MCF 10A (cell line): ENCODE measurements at regions of chr16 and their contacts with region 1.

Region 1: DNA sequence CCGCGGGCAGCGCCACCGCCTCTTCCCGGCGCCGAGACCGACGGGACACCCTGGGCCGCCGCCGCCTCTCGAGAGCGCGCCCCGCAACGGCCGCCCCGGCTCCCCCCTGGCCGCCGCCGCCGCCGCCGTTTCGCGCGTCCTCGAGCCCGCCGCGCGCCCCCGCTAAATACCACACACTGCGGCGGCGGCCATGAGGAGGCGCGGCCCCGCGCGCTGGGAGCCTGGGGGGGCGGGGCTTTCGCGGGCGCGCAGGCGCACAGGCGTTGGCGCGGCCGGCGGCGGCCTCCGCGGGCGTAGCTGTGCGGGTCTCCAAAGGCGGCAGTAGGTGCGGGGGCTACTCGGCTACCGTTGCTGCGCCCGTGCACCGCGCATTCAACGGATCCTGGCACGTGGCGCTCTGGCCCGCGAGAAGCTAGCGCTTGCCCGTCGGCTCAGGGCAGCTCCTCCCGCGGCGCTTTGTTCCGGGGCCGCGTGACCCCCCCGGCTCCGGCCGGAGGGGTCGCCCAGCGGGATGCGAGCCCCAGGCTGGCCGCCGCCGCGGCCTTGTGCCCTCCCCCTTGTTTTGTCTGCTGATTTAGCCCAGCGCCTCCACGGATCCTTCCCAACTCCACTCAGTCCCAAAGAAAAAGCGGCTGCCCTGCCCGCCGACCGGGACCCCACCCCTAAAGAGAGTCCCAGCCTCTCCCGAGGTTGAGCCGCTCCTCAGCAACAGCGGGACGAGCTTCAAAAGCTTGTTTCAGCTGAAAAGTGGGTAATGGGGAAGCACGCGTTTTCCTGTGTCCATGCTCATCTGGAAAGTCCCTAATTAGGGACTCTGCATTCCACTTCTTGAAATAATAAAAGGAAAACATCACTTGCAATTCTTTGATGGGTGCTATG is at the start of gene SIAH1:
- DNase-seq: peak; percentile 83
- H3K4me3 Mint-ChIP-seq: peak within 1 kb of the TSS; percentile 88
- H3K27ac Mint-ChIP-seq: peak within 1 kb of the TSS; percentile 94
- H3K4me1 Mint-ChIP-seq: peaks cover 18% of the 10 kb centered on the region
- H3K27me3 Mint-ChIP-seq: no peaks in the 10 kb centered on the region
- CTCF ChIP-seq: no peak
- total RNA-seq, gene SIAH1: 19.9 and 22.4 TPM in 2 replicates

Region 2: GRCh38 chr16:48231727-48232492 is 153.6 kb before region 1 on chr16:
- CTCF ChIA-PET with region 1: no interaction called
- POLR2A ChIA-PET with region 1: no interaction called
- intact Hi-C with region 1: no loop called
- DNase-seq: peak; percentile 45
- H3K4me3 Mint-ChIP-seq: no peak overlapping the region
- H3K27ac Mint-ChIP-seq: no peak overlapping the region
- H3K4me1 Mint-ChIP-seq: no peaks in the 10 kb centered on the region
- H3K27me3 Mint-ChIP-seq: no peaks in the 10 kb centered on the region
- CTCF ChIP-seq: peak; percentile 12

Region 3: DNA sequence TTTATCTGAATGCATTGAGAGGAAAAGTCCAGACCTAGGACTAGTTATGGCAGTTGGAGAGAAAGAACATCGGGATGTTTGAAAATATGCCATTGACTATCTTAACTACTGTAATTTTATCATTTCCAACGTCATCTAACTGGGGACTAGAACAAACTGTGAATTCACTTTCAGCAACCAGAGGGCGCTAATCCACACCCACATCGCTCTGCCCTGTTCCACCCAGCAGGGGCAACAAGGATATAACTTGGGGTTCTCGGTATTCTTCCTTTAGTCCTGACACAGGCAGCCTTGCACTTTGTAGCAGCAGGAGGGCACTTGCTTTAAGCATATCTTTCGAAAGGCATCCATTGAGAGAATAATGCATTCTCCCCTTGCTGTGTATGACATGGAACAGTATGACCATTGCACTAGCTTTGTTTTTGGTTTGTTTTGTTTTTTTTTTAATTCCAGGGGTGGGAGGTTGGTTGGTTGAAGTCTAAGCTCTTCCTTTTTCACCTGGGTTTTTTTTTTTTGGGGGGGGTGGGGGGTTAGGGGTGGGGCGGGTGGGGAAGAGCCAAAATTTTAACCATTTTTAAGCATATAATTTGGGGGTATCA is 31.8 kb before region 1 on chr16:
- CTCF ChIA-PET with region 1: interaction called, 3 read pairs
- POLR2A ChIA-PET with region 1: interaction called, 3 read pairs
- intact Hi-C with region 1: loop called (anchors 1 kb)
- DNase-seq: peak; percentile 74
- H3K4me3 Mint-ChIP-seq: no peak overlapping the region
- H3K27ac Mint-ChIP-seq: peak overlapping the region; percentile 46
- H3K4me1 Mint-ChIP-seq: no peaks in the 10 kb centered on the region
- H3K27me3 Mint-ChIP-seq: no peaks in the 10 kb centered on the region
- CTCF ChIP-seq: peak; percentile 71

Region 4: DNA sequence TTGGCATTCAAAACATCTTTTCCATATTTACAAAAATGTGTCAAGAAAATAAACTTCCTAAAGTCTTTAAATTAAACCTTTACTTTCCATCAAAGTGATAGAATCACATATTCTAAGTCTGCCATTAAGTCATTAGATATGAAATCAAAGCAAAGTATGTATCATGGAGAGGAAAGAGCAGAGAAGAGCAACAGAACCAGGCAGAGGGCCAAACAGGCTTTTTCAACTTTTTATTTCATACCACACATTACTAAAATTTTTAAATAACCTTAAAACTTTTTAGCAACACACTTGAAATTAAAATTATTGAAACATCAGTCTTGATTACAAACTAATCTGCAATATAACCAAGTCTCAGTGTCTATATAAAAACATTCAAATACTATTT is 14.1 kb before region 1 on chr16:
- CTCF ChIA-PET with region 1: interaction called, 8 read pairs
- POLR2A ChIA-PET with region 1: interaction called, 157 read pairs
- intact Hi-C with region 1: loop called (anchors 1 kb)
- DNase-seq: no peak
- H3K4me3 Mint-ChIP-seq: no peak overlapping the region
- H3K27ac Mint-ChIP-seq: no peak overlapping the region
- H3K4me1 Mint-ChIP-seq: peaks cover 35% of the 10 kb centered on the region
- H3K27me3 Mint-ChIP-seq: no peaks in the 10 kb centered on the region
- CTCF ChIP-seq: no peak

Region 5: GRCh38 chr16:48409839-48410611 is 24.5 kb after region 1 on chr16:
- CTCF ChIA-PET with region 1: interaction called, 6 read pairs
- POLR2A ChIA-PET with region 1: interaction called, 35 read pairs
- intact Hi-C with region 1: no loop called
- DNase-seq: peak; percentile 91
- H3K4me3 Mint-ChIP-seq: peak overlapping the region; percentile 42
- H3K27ac Mint-ChIP-seq: peak overlapping the region; percentile 71
- H3K4me1 Mint-ChIP-seq: peaks cover 26% of the 10 kb centered on the region
- H3K27me3 Mint-ChIP-seq: no peaks in the 10 kb centered on the region
- CTCF ChIP-seq: no peak

Region 6: DNA sequence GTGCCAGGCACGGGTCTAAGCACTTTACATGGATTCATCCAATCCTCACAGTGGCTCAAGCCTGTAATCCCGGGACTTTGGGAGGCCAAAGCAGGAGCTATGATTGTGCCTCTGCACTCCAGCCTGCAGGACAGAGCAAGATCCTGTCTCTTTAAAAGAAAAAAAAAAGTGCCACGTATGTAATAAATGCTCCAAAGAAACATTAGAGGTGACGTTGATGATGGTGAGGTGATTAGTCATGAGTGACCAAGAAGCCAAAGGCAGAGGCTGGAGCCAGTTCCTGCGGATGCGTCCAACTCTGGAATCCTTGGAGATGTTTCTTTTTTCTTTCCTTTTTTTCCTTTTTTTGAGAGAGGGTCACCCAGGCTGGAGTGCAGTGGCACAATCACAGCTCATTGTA is 59.1 kb after region 1 on chr16:
- CTCF ChIA-PET with region 1: no interaction called
- POLR2A ChIA-PET with region 1: interaction called, 4 read pairs
- intact Hi-C with region 1: loop called (anchors 10 kb)
- DNase-seq: peak; percentile 83
- H3K4me3 Mint-ChIP-seq: no peak overlapping the region
- H3K27ac Mint-ChIP-seq: peak overlapping the region; percentile 67
- H3K4me1 Mint-ChIP-seq: peaks cover 10% of the 10 kb centered on the region
- H3K27me3 Mint-ChIP-seq: no peaks in the 10 kb centered on the region
- CTCF ChIP-seq: no peak

Region 7: DNA sequence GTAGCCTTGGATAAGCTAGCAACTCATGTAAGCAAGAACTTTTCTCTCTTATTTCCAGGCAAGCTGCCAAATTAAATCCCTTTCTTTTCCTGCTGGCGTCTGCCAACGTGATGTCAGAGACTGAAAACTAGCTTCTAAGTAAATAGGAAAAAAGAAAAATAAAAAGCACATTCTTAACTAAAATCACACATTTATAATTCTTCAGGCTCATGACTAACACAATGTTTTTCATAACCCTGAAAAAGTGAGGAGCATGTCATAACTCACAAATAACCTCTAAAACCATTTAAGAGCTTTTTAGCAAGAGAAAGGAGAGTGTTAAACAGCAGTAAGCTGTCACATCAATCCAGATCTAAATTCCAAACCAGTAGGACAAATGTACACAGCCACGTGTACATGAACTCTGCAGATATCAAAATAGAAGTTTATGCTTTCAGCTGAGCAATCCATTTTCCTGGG is 114.4 kb after region 1 on chr16:
- CTCF ChIA-PET with region 1: no interaction called
- POLR2A ChIA-PET with region 1: interaction called, 29 read pairs
- intact Hi-C with region 1: no loop called
- DNase-seq: peak; percentile 87
- H3K4me3 Mint-ChIP-seq: no peak overlapping the region
- H3K27ac Mint-ChIP-seq: peak overlapping the region; percentile 73
- H3K4me1 Mint-ChIP-seq: peaks cover 12% of the 10 kb centered on the region
- H3K27me3 Mint-ChIP-seq: no peaks in the 10 kb centered on the region
- CTCF ChIP-seq: no peak

Region 8: GRCh38 chr16:48526058-48526957 is 140.8 kb after region 1 on chr16:
- CTCF ChIA-PET with region 1: interaction called, 8 read pairs
- POLR2A ChIA-PET with region 1: interaction called, 12 read pairs
- intact Hi-C with region 1: loop called (anchors 1 kb)
- DNase-seq: peak; percentile 84
- H3K4me3 Mint-ChIP-seq: no peak overlapping the region
- H3K27ac Mint-ChIP-seq: no peak overlapping the region
- H3K4me1 Mint-ChIP-seq: peaks cover 12% of the 10 kb centered on the region
- H3K27me3 Mint-ChIP-seq: no peaks in the 10 kb centered on the region
- CTCF ChIP-seq: peak; percentile 69